Activated T-helper 1 cell treated with anti-CD3 and anti-CD28 coated beads, Interleukin-12 subunit alpha, Interleukin-12 subunit beta, Interleukin-2, Interleukin-4 antibody, amounts not matched to agents 30 ng/mL and 10 ng/mL and 1 ng/mL, durations not matched to agents 14 hours and 24 hours and 36 hours (primary cell): ENCODE measurements at regions of chr19 and their contacts with region 1.

Region 1: DNA sequence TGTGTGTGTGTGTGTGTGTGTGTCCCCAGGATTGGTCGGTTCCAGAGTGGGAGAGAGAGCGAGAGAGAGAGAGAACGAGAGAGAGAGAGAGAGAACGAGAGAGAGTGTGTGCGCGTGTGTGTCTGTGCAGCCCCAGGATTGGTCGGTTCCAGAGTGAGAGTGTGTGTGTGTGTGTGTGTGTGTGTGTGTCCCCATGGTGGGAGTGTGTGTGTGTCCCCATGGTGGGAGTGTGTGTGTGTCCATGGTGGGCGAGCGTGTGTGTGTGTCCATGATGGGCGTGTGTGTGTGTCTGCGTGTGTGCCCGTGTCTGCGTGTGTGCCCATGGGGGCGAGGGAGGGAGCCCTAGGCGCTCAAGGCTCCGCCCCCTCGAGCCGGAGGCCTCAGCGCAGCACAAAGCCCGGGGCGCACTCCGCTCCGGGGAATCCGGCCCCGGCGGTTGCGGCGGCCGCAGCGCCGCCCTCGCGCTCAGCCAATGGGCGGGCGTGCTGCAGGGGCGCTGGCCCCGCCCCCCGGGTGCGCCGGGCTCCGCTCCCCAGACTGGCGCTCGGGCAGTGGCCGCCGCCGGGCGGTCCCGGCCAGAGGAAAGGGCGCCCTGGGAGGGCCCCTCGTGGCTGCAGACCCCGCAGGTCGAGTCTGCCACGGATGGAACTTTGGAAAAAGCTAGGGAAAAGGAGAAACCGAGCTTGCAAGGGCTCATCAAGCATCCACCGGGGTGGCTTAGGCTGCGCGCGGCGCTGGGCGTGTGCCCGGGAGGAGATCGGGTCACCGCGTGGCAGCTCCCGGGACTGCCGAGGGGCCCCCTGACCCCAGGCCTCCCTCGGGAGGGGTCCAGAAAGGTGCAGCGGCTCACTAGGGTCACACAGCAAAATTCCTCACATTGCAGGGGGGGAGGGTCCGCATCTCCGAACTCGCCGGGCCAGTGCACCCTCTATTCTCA is 96.2 kb downstream of the INSR start:
- DNase-seq: peak; percentile 90
- H3K4me3 Mint-ChIP-seq: peak overlapping the region; percentile 81
- H3K27ac Mint-ChIP-seq: peak overlapping the region; percentile 95
- H3K4me1 Mint-ChIP-seq: peaks cover 18% of the 10 kb centered on the region
- H3K27me3 Mint-ChIP-seq: peaks cover 43% of the 10 kb centered on the region

Region 2: GRCh38 chr19:7177926-7178325 is 20.1 kb before region 1 on chr19:
- intact Hi-C with region 1: loop called (anchors 1 kb)
- DNase-seq: no peak
- H3K4me3 Mint-ChIP-seq: no peak overlapping the region
- H3K27ac Mint-ChIP-seq: no peak overlapping the region
- H3K4me1 Mint-ChIP-seq: peaks cover 18% of the 10 kb centered on the region
- H3K27me3 Mint-ChIP-seq: peaks cover 4% of the 10 kb centered on the region

Region 3: GRCh38 chr19:7394731-7395359 is 196.8 kb after region 1 on chr19:
- intact Hi-C with region 1: loop called (anchors 5 kb)
- DNase-seq: peak; percentile 93
- H3K4me3 Mint-ChIP-seq: peak overlapping the region; percentile 89
- H3K27ac Mint-ChIP-seq: peak overlapping the region; percentile 61
- H3K4me1 Mint-ChIP-seq: peaks cover 26% of the 10 kb centered on the region
- H3K27me3 Mint-ChIP-seq: no peaks in the 10 kb centered on the region

Region 4: GRCh38 chr19:7868676-7869452 is 670.8 kb after region 1 on chr19:
- intact Hi-C with region 1: loop called (anchors 2 kb)
- DNase-seq: peak; percentile 75
- H3K4me3 Mint-ChIP-seq: peak overlapping the region; percentile 61
- H3K27ac Mint-ChIP-seq: no peak overlapping the region
- H3K4me1 Mint-ChIP-seq: peaks cover 21% of the 10 kb centered on the region
- H3K27me3 Mint-ChIP-seq: peaks cover 44% of the 10 kb centered on the region